Posterior vena cava (tissue), 2 donors: ENCODE measurements at regions of chr5 and their contacts with region 1.

Region 1: GRCh38 chr5:127216898-127217675 is 73.5 kb upstream of the MEGF10 start:
- DNase-seq: no peak

Region 2: GRCh38 chr5:127243011-127243410 is 25.9 kb after region 1 on chr5:
- intact Hi-C with region 1: loop called in 1 of 2 experiments (anchors 1 kb)
- DNase-seq: no peak

Region 3: GRCh38 chr5:127358740-127359139 is 141.7 kb after region 1 on chr5:
- intact Hi-C with region 1: no loop called
- DNase-seq: no peak